Cardiac septum (tissue), 1 donor: ENCODE measurements at regions of chr14 and their contacts with region 1.

Region 1: GRCh38 chr14:22319526-22320361 is 269.3 kb downstream of the DAD1 start:
- DNase-seq: no peak

Region 2: DNA sequence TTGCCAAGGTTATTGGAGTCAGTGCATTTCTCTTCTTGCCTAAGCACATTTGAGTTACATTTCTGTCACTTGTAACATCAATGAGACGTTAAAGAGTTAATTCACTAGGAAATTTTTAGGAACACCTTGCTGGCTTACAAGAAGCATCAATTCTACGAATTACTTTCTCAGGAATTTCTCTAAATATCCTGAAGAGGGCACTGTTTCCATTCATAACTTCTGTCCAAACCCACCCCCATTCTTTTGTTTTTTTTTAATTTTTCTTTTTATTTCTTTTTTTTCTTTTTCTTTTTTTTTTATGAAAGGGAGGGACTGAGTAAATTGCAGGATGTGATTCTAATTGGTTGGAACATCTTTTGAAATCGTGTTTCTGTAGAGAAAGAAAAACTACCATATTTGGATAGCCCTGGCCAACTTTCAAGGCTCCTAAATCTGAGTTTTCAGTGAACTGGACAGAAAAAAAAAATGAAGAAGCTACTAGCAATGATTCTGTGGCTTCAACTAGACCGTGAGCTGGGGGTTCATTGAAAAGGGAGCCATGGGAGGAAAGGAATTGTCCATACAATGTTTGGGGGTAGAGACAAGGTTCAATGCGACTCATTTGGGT is 16.1 kb before region 1 on chr14:
- intact Hi-C with region 1: no loop called
- DNase-seq: no peak

Region 3: GRCh38 chr14:22344673-22345072 is 24.9 kb after region 1 on chr14:
- intact Hi-C with region 1: no loop called
- DNase-seq: no peak

Region 4: GRCh38 chr14:22370084-22370847 is 50.5 kb after region 1 on chr14:
- intact Hi-C with region 1: loop called (anchors 5 kb)
- DNase-seq: no peak

Region 5: GRCh38 chr14:22418631-22419030 is 98.9 kb after region 1 on chr14:
- intact Hi-C with region 1: no loop called
- DNase-seq: no peak